ENCODE measurements at regions of chr15 and their contacts with region 1.

Region 1: GRCh38 chr15:50278496-50278895 is 13.0 kb upstream of the HDC start:
- DNase-seq: no peak
- H3K4me3 Mint-ChIP-seq: no peak overlapping the region
- H3K27ac Mint-ChIP-seq: no peak overlapping the region
- H3K4me1 Mint-ChIP-seq: peaks cover 15% of the 10 kb centered on the region
- H3K27me3 Mint-ChIP-seq: no peaks in the 10 kb centered on the region

Region 2: DNA sequence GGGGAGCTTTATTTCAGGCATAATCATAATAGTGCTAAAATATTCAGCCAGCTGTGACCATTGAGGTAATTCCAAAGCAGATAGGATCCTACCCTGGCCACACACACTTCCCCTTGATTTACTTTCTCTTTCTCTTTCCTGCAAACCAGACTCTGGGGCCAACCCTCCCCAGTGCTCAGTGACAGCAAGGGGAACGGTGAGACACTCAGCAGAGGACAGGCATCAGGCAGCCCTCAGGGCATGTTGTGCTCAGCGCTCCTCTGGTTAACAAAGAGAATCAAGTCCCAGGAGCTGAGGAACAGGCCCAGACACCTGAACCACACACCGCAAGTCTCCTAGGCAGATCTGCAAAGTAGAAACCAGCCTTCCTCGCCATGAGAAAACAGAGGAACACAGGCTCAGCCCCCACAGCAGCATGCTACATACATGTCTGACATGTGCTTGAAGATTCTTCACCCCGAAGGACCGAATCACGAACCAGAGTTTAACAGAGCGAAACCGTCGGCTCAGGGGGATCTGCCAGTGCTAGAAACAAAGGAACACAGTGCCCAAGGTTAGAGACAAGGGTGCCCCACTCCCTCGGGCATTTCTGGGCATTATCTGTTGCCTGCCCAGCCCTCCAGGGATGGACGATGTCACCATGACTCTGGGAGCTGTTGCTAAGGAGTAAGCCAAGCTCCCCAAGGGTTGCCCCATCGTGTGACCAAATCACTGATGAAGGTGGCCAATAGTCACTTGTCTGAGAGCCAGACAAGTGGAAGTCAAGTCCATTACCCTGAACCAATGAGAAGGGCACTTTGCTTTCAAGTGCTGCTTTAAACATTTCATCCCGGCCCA is 30.5 kb before region 1 on chr15:
- intact Hi-C with region 1: loop called (anchors 1 kb)
- DNase-seq: peak; percentile 91
- H3K4me3 Mint-ChIP-seq: peak overlapping the region; percentile 81
- H3K27ac Mint-ChIP-seq: peak overlapping the region; percentile 99
- H3K4me1 Mint-ChIP-seq: peaks cover 53% of the 10 kb centered on the region
- H3K27me3 Mint-ChIP-seq: no peaks in the 10 kb centered on the region